GM12878 (cell line): ENCODE measurements at regions of chr2 and their contacts with region 1.

Region 1: GRCh38 chr2:70948337-70949003 is 12.8 kb downstream of the ATP6V1B1 start:
- DNase-seq: no peak
- ATAC-seq: peak; percentile 98
- H3K4me3 ChIP-seq: no peak overlapping the region
- H3K27ac ChIP-seq: no peak overlapping the region
- H3K4me1 ChIP-seq: no peaks in the 10 kb centered on the region; the same call in 1 of the 2 replicates
- H3K27me3 ChIP-seq: no peaks in the 10 kb centered on the region
- CTCF ChIP-seq: peak; percentile 73 to 87 (median 87)
- EP300 ChIP-seq: no peak
- POLR2A ChIP-seq: no peak
- RAD21 ChIP-seq: peak; percentile 36; the same call in 1 of the 2 replicates

Region 2: DNA sequence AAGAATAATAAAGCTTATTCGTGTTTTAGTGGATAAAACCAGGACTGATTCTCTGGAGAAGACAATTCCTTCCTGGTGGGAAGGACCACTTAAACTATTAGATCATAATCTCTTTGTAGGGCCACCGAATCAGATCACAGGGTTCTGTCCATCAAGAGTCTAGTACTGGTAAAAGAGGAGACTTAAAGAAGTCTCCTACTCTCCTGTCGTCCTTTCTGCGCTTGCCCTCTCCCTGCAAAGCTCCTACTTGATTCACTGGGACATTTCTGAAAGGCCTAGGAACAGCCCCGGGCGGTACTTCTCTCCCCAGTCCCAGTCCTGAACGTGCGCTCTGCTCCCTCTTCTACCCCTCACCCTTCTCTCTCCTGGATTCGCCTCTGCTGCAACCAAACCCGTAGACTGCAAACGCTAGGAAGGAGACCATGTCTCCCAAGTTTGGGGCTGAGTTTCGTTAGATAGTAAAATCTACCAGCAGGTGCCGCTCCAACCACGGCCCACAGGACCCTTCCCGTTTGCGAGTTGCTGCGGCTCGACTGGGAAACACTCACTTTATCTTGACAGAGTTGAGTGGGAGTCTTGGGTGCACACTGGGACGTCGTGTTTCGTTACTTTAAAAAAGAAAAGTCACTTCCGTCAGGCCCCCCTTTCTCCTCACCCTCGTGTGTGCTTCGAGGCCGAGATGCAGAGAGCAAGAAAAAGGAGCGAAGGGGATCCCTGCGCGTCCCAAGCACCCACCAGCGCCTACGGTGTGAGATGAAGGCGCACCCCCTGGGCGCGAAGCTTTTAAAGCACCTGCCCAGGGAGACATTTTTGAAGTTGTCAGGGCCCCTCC is 158.9 kb before region 1 on chr2:
- CTCF ChIA-PET with region 1: interaction called, 5 read pairs
- POLR2A ChIA-PET with region 1: no interaction called
- RAD21 ChIA-PET with region 1: no interaction called
- SMC1A ChIA-PET with region 1: interaction called, 3 read pairs
- in situ Hi-C with region 1: no loop called
- intact Hi-C with region 1: loop called (anchors 2 kb)
- DNase-seq: no peak
- ATAC-seq: peak; percentile 76
- H3K4me3 ChIP-seq: no peak overlapping the region
- H3K27ac ChIP-seq: no peak overlapping the region
- H3K4me1 ChIP-seq: no peaks in the 10 kb centered on the region
- H3K27me3 ChIP-seq: peaks cover 5 to 10% of the 10 kb centered on the region in 2 experiments
- CTCF ChIP-seq: peak; percentile 52 to 65 (median 64); a peak in 5 of 6 replicates
- EP300 ChIP-seq: no peak
- POLR2A ChIP-seq: no peak
- RAD21 ChIP-seq: peak; percentile 69

Region 3: GRCh38 chr2:70861777-70862625 is 86.5 kb before region 1 on chr2:
- CTCF ChIA-PET with region 1: interaction called, 10 read pairs
- POLR2A ChIA-PET with region 1: no interaction called
- RAD21 ChIA-PET with region 1: interaction called, 3 read pairs
- SMC1A ChIA-PET with region 1: interaction called, 5 read pairs
- in situ Hi-C with region 1: loop called (anchors 5 kb)
- intact Hi-C with region 1: loop called (anchors 2 kb)
- DNase-seq: no peak
- ATAC-seq: peak; percentile 90
- H3K4me3 ChIP-seq: no peak overlapping the region
- H3K27ac ChIP-seq: no peak overlapping the region
- H3K4me1 ChIP-seq: no peaks in the 10 kb centered on the region
- H3K27me3 ChIP-seq: peaks cover 0 to 2% of the 10 kb centered on the region in 2 experiments; a peak in 3 of 4 replicates
- CTCF ChIP-seq: peak; percentile 93 to 98 (median 93); a peak in 5 of 6 replicates
- EP300 ChIP-seq: no peak
- POLR2A ChIP-seq: no peak
- RAD21 ChIP-seq: peak; percentile 81

Region 4: GRCh38 chr2:70871398-70872211 is 76.9 kb before region 1 on chr2:
- CTCF ChIA-PET with region 1: interaction called, 94 read pairs
- POLR2A ChIA-PET with region 1: no interaction called
- RAD21 ChIA-PET with region 1: interaction called, 12 read pairs
- SMC1A ChIA-PET with region 1: interaction called, 6 read pairs
- in situ Hi-C with region 1: loop called (anchors 5 kb)
- intact Hi-C with region 1: loop called (anchors 1 kb)
- DNase-seq: no peak
- ATAC-seq: peak; percentile 100
- H3K4me3 ChIP-seq: no peak overlapping the region
- H3K27ac ChIP-seq: no peak overlapping the region
- H3K4me1 ChIP-seq: no peaks in the 10 kb centered on the region
- H3K27me3 ChIP-seq: peaks cover 0 to 3% of the 10 kb centered on the region in 2 experiments; a peak in 3 of 4 replicates
- CTCF ChIP-seq: peak; percentile 81 to 92 (median 87)
- EP300 ChIP-seq: no peak
- POLR2A ChIP-seq: no peak
- RAD21 ChIP-seq: peak; percentile 77

Region 5: GRCh38 chr2:70935468-70936164 is 12.9 kb before region 1 on chr2 and contains the start of gene ATP6V1B1:
- CTCF ChIA-PET with region 1: interaction called, 12 read pairs
- POLR2A ChIA-PET with region 1: no interaction called
- RAD21 ChIA-PET with region 1: no interaction called
- SMC1A ChIA-PET with region 1: no interaction called
- in situ Hi-C with region 1: no loop called
- intact Hi-C with region 1: no loop called
- DNase-seq: no peak
- ATAC-seq: no peak
- H3K4me3 ChIP-seq: no peak within 1 kb of the TSS
- H3K27ac ChIP-seq: no peak within 1 kb of the TSS
- H3K4me1 ChIP-seq: no peaks in the 10 kb centered on the region
- H3K27me3 ChIP-seq: peaks cover 0 to 5% of the 10 kb centered on the region in 2 experiments; a peak in 2 of 4 replicates
- CTCF ChIP-seq: no peak
- EP300 ChIP-seq: no peak
- POLR2A ChIP-seq: no peak
- RAD21 ChIP-seq: no peak
- polyA plus RNA-seq, gene ATP6V1B1: not detected

Region 6: GRCh38 chr2:70964596-70965386 is 16.3 kb after region 1 on chr2:
- CTCF ChIA-PET with region 1: interaction called, 11 read pairs
- POLR2A ChIA-PET with region 1: no interaction called
- RAD21 ChIA-PET with region 1: no interaction called
- SMC1A ChIA-PET with region 1: no interaction called
- in situ Hi-C with region 1: no loop called
- intact Hi-C with region 1: no loop called
- DNase-seq: no peak
- ATAC-seq: peak; percentile 97
- H3K4me3 ChIP-seq: peak overlapping the region; percentile 74
- H3K27ac ChIP-seq: no peak overlapping the region
- H3K4me1 ChIP-seq: no peaks in the 10 kb centered on the region
- H3K27me3 ChIP-seq: peaks cover 0 to 3% of the 10 kb centered on the region in 2 experiments; a peak in 1 of 4 replicates
- CTCF ChIP-seq: peak; percentile 75 to 87 (median 85)
- EP300 ChIP-seq: no peak
- POLR2A ChIP-seq: no peak
- RAD21 ChIP-seq: peak; percentile 64

Region 7: DNA sequence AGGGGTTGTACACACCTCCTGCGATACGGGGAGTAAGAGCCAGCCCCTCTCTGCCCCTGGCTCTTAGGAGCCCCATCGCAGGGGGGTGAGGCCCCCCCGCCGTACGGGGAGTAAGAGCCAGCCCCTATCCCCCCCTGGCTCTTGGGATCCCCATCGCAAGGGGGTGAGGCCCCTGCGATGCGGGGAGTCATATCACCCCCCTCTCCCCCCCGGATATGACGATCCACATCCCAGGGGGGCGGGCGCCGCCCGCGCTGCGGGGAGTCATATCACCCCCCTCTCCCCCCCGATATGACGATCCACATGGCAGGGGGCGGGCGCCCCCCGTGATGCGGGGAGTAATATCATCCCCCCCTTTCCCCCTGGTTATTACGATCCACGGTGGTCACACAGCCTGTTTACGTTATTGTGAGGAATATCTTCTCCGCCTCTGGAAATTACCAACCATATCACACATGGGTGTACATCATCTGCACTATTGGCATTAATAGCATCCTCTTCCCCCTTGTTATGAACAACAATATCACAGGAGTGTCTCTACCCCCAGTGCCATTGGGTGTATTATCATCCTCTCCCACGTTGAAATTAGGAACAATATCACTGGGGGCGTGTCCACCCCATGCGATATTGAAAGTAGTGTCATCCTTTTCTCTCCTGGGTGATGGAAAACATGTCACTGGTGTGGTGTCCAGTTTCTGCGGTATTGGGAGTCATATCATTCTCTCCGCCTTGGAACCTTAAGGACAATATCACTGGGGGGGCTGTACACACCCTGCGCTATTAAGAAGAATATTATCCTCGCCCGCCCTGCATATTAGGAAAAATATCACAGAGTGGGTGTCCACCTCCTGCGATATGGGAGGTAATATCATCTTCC is 95.3 kb after region 1 on chr2:
- CTCF ChIA-PET with region 1: no interaction called
- POLR2A ChIA-PET with region 1: no interaction called
- RAD21 ChIA-PET with region 1: no interaction called
- SMC1A ChIA-PET with region 1: no interaction called
- in situ Hi-C with region 1: no loop called
- intact Hi-C with region 1: no loop called
- DNase-seq: no peak
- ATAC-seq: no peak
- H3K4me3 ChIP-seq: no peak overlapping the region
- H3K27ac ChIP-seq: no peak overlapping the region
- H3K4me1 ChIP-seq: no peaks in the 10 kb centered on the region
- H3K27me3 ChIP-seq: no peaks in the 10 kb centered on the region
- CTCF ChIP-seq: no peak
- EP300 ChIP-seq: no peak
- POLR2A ChIP-seq: no peak
- RAD21 ChIP-seq: no peak